Activated CD4-positive, alpha-beta T cell treated with anti-CD3 and anti-CD28 coated beads for 36 hours (primary cell): ENCODE measurements at regions of chr1 and their contacts with region 1.

Region 1: GRCh38 chr1:43358746-43359693 is at the start of gene CDC20:
- DNase-seq: peak; percentile 99
- ATAC-seq: peak; percentile 99
- H3K4me3 Mint-ChIP-seq: peak within 1 kb of the TSS; percentile 97
- H3K27ac Mint-ChIP-seq: peak within 1 kb of the TSS; percentile 93
- H3K4me1 Mint-ChIP-seq: peaks cover 32% of the 10 kb centered on the region
- H3K27me3 Mint-ChIP-seq: no peaks in the 10 kb centered on the region
- total RNA-seq, gene CDC20: 158 to 163 TPM

Region 2: DNA sequence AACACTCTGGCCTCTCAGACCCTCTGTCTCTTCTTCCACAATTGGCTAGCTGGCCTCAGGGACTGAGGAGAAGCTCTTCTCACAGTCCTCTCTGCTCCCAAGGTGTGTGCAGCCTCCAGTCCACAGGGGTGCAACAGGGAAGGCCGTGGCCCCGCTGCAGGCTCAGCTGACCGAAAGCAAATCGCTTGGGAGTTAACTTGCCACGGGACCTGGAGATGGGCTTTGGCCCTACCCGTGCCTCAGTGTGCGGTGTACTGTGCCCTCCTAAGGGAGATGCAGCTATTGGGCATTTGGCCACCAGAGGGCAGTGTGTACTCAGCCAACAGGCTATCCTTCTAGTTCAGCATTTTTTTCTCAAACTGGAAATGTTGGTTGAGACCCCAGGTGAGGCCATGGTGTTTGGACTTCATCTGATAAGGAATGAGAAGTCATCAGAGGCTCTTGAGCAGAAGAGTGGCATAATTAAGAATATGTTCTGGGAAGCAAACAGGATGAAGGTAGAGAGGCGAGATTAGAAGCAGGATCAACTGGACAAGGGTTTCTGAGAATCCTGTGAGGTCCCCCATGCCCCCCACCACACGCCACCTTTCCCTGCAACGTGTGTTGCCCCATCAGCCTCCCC is 131.8 kb before region 1 on chr1:
- CTCF ChIA-PET with region 1: interaction called, 9 read pairs
- POLR2A ChIA-PET with region 1: no interaction called
- intact Hi-C with region 1: loop called (anchors 1 to 5 kb)
- DNase-seq: peak; percentile 92
- ATAC-seq: peak; percentile 93
- H3K4me3 Mint-ChIP-seq: no peak overlapping the region
- H3K27ac Mint-ChIP-seq: no peak overlapping the region
- H3K4me1 Mint-ChIP-seq: no peaks in the 10 kb centered on the region
- H3K27me3 Mint-ChIP-seq: peaks cover 2% of the 10 kb centered on the region

Region 3: GRCh38 chr1:43238085-43238484 is 120.9 kb before region 1 on chr1:
- CTCF ChIA-PET with region 1: no interaction called
- POLR2A ChIA-PET with region 1: no interaction called
- intact Hi-C with region 1: loop called in 1 of 2 experiments (anchors 1 kb)
- DNase-seq: peak; percentile 68
- ATAC-seq: peak; percentile 77
- H3K4me3 Mint-ChIP-seq: no peak overlapping the region
- H3K27ac Mint-ChIP-seq: no peak overlapping the region
- H3K4me1 Mint-ChIP-seq: no peaks in the 10 kb centered on the region
- H3K27me3 Mint-ChIP-seq: no peaks in the 10 kb centered on the region

Region 4: GRCh38 chr1:43348809-43349583 is 10.0 kb before region 1 on chr1:
- CTCF ChIA-PET with region 1: interaction called, 4 read pairs
- POLR2A ChIA-PET with region 1: no interaction called
- intact Hi-C with region 1: loop called (anchors 1 kb)
- DNase-seq: peak; percentile 89
- ATAC-seq: peak; percentile 89
- H3K4me3 Mint-ChIP-seq: peak overlapping the region; percentile 71
- H3K27ac Mint-ChIP-seq: peak overlapping the region; percentile 72
- H3K4me1 Mint-ChIP-seq: peaks cover 19% of the 10 kb centered on the region
- H3K27me3 Mint-ChIP-seq: no peaks in the 10 kb centered on the region

Region 5: GRCh38 chr1:43389326-43390313 is 30.6 kb after region 1 on chr1 and contains the starts of genes MED8 and SZT2:
- CTCF ChIA-PET with region 1: interaction called, 3 read pairs
- POLR2A ChIA-PET with region 1: no interaction called
- intact Hi-C with region 1: loop called (anchors 1 kb)
- DNase-seq: peak; percentile 94
- ATAC-seq: peak; percentile 93
- H3K4me3 Mint-ChIP-seq: peak within 1 kb of the TSS; percentile 99
- H3K27ac Mint-ChIP-seq: peak within 1 kb of the TSS; percentile 97
- H3K4me1 Mint-ChIP-seq: peaks cover 39% of the 10 kb centered on the region
- H3K27me3 Mint-ChIP-seq: no peaks in the 10 kb centered on the region
- total RNA-seq, gene MED8: 32.3 to 36.6 TPM
- total RNA-seq, gene SZT2: 33.6 to 36.3 TPM

Region 6: DNA sequence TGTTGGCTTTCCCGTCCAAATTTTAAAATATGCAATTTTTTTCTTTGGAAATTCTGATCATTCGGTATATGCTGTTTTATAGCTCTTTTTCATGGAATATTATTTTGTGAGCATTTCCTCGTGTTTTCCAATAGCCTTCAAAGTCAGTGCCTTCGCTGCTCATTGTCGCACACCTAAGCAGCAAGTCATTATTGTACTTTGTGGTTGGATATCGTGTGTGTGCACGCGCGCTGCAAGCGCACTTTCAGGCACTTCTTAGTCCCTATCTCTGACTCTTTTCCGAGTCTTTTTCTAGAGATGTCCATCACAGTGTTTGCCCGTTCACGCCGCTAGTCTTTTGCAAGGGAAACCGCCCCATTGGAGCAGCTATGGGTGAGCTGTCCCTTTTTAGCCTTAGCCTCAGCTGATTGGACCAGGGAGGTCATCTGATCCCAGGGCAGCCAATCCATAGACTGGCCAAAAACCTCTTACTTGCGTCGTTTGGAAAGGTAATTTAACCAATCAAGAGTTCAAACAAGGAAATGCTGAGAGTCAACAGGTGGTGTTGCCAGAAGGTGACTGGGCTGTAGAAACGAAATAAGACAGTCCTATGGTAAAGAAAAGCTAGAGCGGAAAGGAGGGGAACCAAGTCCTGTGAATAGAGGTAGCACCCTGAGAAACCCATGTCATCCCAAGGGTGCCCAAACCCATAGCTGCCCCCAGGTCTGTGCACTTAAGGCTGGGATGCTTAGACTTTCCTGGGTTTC is 95.4 kb after region 1 on chr1:
- CTCF ChIA-PET with region 1: no interaction called
- POLR2A ChIA-PET with region 1: no interaction called
- intact Hi-C with region 1: loop called in 1 of 2 experiments (anchors 2 kb)
- DNase-seq: peak; percentile 78
- ATAC-seq: peak; percentile 92
- H3K4me3 Mint-ChIP-seq: peak overlapping the region; percentile 79
- H3K27ac Mint-ChIP-seq: peak overlapping the region; percentile 79
- H3K4me1 Mint-ChIP-seq: peaks cover 17% of the 10 kb centered on the region
- H3K27me3 Mint-ChIP-seq: peaks cover 16% of the 10 kb centered on the region

Region 7: DNA sequence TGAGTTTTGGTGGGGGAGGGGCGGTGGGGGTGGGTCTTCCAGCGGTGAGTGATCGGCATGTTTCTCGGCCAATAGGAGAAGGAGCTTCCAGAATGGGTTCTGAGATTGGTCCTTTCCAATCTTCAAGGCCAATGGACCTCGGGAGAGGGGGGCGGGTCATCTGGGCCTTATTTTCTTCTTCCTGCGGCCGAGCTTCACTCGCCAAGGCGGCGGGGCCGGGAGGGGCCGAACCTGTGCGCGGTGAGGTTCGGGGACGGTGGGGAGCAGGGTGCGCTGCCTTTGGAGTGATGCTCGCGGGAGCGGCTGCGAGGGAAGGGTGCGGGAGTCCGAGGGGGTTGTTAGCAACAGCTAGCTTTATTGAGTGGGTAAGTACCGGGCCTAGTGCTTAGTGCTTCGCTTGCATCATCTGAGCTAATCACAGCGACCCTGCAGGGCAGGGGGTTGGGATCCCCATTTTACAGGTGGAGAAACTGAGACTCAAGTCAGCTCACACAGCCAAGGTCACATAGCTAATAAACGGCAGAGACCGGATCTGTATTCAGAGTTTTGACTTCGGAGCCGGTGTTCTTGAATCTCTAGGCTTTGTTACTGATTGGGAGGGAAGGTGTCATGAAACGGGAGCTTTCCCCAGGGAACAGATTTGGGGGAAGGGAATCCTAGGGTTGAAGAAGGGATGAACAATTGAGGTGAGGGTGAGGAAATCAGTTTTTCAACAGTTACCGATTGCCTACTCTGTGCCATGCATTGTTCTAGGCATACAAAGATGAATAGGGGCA is 291.5 kb after region 1 on chr1:
- CTCF ChIA-PET with region 1: interaction called, 4 read pairs
- POLR2A ChIA-PET with region 1: no interaction called
- intact Hi-C with region 1: loop called in 1 of 2 experiments (anchors 1 kb)
- DNase-seq: peak; percentile 95
- ATAC-seq: peak; percentile 81
- H3K4me3 Mint-ChIP-seq: peak overlapping the region; percentile 89
- H3K27ac Mint-ChIP-seq: peak overlapping the region; percentile 97
- H3K4me1 Mint-ChIP-seq: peaks cover 31% of the 10 kb centered on the region
- H3K27me3 Mint-ChIP-seq: no peaks in the 10 kb centered on the region